Caco-2 (cell line): ENCODE measurements at regions of chr7 and their contacts with region 1.

Region 1: GRCh38 chr7:110003827-110004226 is 1087.1 kb upstream of the LRRN3 start:
- DNase-seq: no peak
- H3K4me3 ChIP-seq: no peak overlapping the region
- H3K4me3 Mint-ChIP-seq: no peak overlapping the region
- H3K27ac Mint-ChIP-seq: no peak overlapping the region
- H3K4me1 ChIP-seq: no peaks in the 10 kb centered on the region
- H3K4me1 Mint-ChIP-seq: no peaks in the 10 kb centered on the region
- H3K27me3 ChIP-seq: no peaks in the 10 kb centered on the region
- H3K27me3 Mint-ChIP-seq: no peaks in the 10 kb centered on the region
- CTCF ChIP-seq: peak in 1 of 2 experiments; percentile 17

Region 2: DNA sequence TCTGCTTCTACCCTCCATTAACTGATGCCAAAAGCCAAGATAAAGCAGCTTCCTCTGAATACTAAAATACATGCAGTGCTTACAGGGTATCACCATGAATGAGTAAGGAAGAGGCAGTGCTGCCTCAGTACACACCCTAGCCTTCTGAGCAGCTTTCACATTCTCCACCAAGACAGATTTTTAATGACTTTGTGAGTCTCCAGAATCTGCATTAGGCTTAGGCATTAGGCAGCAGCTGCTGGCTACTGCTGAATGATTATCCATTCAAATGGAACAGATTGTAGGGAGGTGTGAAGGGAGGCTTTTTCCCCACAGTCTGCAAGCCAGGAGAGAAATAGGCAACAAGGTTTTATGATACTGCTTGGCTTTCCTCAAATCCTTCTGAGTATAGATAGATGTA is 139.6 kb before region 1 on chr7:
- CTCF ChIA-PET with region 1: no interaction called
- POLR2A ChIA-PET with region 1: no interaction called
- intact Hi-C with region 1: loop called (anchors 10 kb)
- DNase-seq: no peak
- H3K4me3 ChIP-seq: no peak overlapping the region
- H3K4me3 Mint-ChIP-seq: no peak overlapping the region
- H3K27ac Mint-ChIP-seq: no peak overlapping the region
- H3K4me1 ChIP-seq: peaks cover 6% of the 10 kb centered on the region
- H3K4me1 Mint-ChIP-seq: peaks cover 17% of the 10 kb centered on the region
- H3K27me3 ChIP-seq: no peaks in the 10 kb centered on the region
- H3K27me3 Mint-ChIP-seq: no peaks in the 10 kb centered on the region
- CTCF ChIP-seq: no peak

Region 3: DNA sequence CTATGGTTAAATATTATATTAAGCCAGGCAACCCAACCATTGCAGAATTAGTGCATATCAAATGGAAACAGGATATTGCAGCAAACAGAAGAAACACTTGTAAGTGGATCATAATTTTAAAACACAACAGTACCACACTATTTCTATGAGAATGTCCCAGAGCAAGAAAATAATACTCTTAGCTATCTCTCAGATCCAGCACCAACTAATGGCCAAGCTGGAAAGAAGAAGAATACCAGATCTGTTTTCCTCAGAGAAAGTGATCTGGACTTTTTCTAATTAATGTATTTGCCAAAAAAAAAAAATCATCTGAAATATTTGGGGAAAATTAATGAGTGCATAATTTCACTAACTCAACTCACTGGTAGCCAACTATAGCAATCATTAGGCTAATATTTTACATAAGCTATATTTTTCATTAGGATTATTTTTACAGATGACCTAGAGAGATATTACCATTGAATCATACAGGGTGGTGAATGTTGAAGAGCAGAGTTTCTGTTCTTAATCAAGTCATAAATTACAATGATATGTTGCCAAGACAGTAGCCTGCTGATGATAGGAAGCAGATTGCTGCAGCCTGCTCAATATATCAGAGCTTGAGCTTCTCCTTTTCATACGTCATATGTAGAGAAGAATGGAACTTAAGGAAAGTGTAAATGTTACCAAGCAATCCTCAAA is 91.7 kb after region 1 on chr7:
- CTCF ChIA-PET with region 1: no interaction called
- POLR2A ChIA-PET with region 1: no interaction called
- intact Hi-C with region 1: no loop called
- DNase-seq: no peak
- H3K4me3 ChIP-seq: no peak overlapping the region
- H3K4me3 Mint-ChIP-seq: no peak overlapping the region
- H3K27ac Mint-ChIP-seq: no peak overlapping the region
- H3K4me1 ChIP-seq: no peaks in the 10 kb centered on the region
- H3K4me1 Mint-ChIP-seq: no peaks in the 10 kb centered on the region
- H3K27me3 ChIP-seq: no peaks in the 10 kb centered on the region
- H3K27me3 Mint-ChIP-seq: peaks cover 2% of the 10 kb centered on the region
- CTCF ChIP-seq: no peak

Region 4: GRCh38 chr7:110675383-110676103 is 671.7 kb after region 1 on chr7:
- CTCF ChIA-PET with region 1: no interaction called
- POLR2A ChIA-PET with region 1: no interaction called
- intact Hi-C with region 1: no loop called
- DNase-seq: no peak
- H3K4me3 ChIP-seq: no peak overlapping the region
- H3K4me3 Mint-ChIP-seq: no peak overlapping the region
- H3K27ac Mint-ChIP-seq: peak overlapping the region; percentile 96
- H3K4me1 ChIP-seq: peaks cover 29% of the 10 kb centered on the region
- H3K4me1 Mint-ChIP-seq: peaks cover 14% of the 10 kb centered on the region
- H3K27me3 ChIP-seq: no peaks in the 10 kb centered on the region
- H3K27me3 Mint-ChIP-seq: no peaks in the 10 kb centered on the region
- CTCF ChIP-seq: no peak